K562 (cell line): ENCODE measurements at regions of chr3 and their contacts with region 1.

Region 1: GRCh38 chr3:32296256-32297204 is 58.0 kb downstream of the CMTM8 start:
- DNase-seq: peak; percentile 73 to 85 (median 83)
- ATAC-seq: peak; percentile 98
- H3K4me3 ChIP-seq: no peak overlapping the region
- H3K27ac ChIP-seq: no peak overlapping the region
- H3K4me1 ChIP-seq: no peaks in the 10 kb centered on the region
- H3K27me3 ChIP-seq: peaks cover 2 to 11% of the 10 kb centered on the region in 2 experiments; a peak in 4 of 5 replicates
- CTCF ChIP-seq: peak; percentile 88 to 92 (median 91)
- EP300 ChIP-seq: no peak
- POLR2A ChIP-seq: no peak
- RAD21 ChIP-seq: peak; percentile 55 to 75

Region 2: DNA sequence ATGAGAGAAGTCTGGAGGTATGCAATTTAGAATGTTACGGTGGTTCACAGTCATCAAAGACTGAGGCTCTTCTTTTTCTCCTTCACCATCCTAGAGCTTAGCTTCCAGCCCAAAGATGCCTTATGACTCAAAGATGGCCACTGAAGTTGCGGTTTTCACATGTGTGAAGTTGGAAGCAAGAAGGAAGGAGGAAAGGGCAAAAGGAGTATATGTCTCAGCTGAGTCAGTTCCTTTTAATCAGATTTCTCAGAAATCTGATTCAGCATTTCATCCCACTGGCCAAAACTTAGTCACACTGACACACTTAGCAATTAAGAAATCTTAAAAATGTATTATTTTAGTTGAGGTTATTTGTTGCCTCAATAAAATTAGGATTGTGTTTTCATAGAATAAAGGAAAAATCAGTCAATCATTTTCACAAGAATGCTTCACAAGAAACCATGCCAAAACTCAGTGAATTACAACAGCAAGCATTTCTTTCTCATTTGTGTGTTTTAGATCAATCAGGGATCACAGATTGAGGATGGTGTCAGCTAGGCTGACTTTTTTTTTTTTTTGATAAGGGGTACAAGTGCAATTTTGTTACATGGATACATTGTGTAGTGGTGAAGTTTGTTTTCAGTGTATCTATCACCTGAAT is 1191.0 kb before region 1 on chr3:
- CTCF ChIA-PET with region 1: no interaction called
- POLR2A ChIA-PET with region 1: no interaction called
- in situ Hi-C with region 1: no loop called
- intact Hi-C with region 1: no loop called
- DNase-seq: peak in 2 of 4 experiments; percentile 15 to 65
- ATAC-seq: peak; percentile 49; the same call in 2 of the 3 replicates
- H3K4me3 ChIP-seq: no peak overlapping the region
- H3K27ac ChIP-seq: no peak overlapping the region
- H3K4me1 ChIP-seq: no peaks in the 10 kb centered on the region
- H3K27me3 ChIP-seq: no peaks in the 10 kb centered on the region
- CTCF ChIP-seq: no peak
- EP300 ChIP-seq: peak; percentile 43; the same call in 1 of the 2 replicates
- POLR2A ChIP-seq: no peak
- RAD21 ChIP-seq: no peak

Region 3: DNA sequence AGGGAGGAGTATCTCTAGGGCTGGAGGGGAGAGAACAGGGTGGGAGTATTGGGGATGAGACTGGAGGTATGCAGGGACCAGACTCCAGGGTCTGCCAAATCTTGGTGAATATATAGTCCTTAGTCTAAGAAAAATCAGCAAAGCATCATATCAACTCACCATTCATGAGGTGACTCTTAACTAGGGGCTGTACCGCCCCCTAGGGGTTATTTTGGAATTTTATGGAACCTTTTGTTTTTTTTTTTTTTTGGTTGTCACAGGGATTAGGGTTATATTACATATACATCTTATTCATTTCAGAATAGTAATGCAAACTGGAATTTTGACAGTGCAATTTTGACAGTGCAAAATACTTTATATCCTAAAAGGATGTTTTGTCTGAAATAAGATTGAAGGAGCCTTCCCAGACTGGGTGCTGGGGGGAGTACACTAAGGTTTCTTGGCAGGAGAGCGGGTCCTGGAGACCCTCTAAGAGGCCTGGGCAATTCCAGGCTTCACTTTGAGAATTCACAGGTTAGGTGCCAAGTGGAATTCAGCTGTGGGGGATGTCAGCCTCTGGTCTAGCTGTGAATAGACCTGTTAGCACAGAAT is 102.6 kb after region 1 on chr3:
- CTCF ChIA-PET with region 1: no interaction called
- POLR2A ChIA-PET with region 1: no interaction called
- in situ Hi-C with region 1: no loop called
- intact Hi-C with region 1: loop called (anchors 2 kb)
- DNase-seq: peak; percentile 51 to 68 (median 58)
- ATAC-seq: peak; percentile 77
- H3K4me3 ChIP-seq: no peak overlapping the region
- H3K27ac ChIP-seq: no peak overlapping the region
- H3K4me1 ChIP-seq: peaks cover 0 to 6% of the 10 kb centered on the region in 2 experiments; a peak in 1 of 5 replicates
- H3K27me3 ChIP-seq: peaks cover 24 to 39% of the 10 kb centered on the region in 2 experiments; a peak in 4 of 5 replicates
- CTCF ChIP-seq: peak; percentile 63 to 87 (median 67); a peak in 5 of 6 replicates
- EP300 ChIP-seq: no peak
- POLR2A ChIP-seq: no peak
- RAD21 ChIP-seq: peak; percentile 28 to 63; a peak in 3 of 4 replicates

Region 4: GRCh38 chr3:32467333-32468070 is 171.0 kb after region 1 on chr3:
- CTCF ChIA-PET with region 1: no interaction called
- POLR2A ChIA-PET with region 1: no interaction called
- in situ Hi-C with region 1: no loop called
- intact Hi-C with region 1: loop called (anchors 5 kb)
- DNase-seq: peak; percentile 84 to 94 (median 89)
- ATAC-seq: peak; percentile 99
- H3K4me3 ChIP-seq: no peak overlapping the region
- H3K27ac ChIP-seq: no peak overlapping the region
- H3K4me1 ChIP-seq: peaks cover 0 to 7% of the 10 kb centered on the region in 2 experiments; a peak in 2 of 5 replicates
- H3K27me3 ChIP-seq: no peaks in the 10 kb centered on the region
- CTCF ChIP-seq: peak; percentile 92 to 97 (median 94)
- EP300 ChIP-seq: no peak
- POLR2A ChIP-seq: no peak
- RAD21 ChIP-seq: peak; percentile 63 to 90